H1 (cell line): ENCODE measurements at regions of chr3 and their contacts with region 1.

Region 1: DNA sequence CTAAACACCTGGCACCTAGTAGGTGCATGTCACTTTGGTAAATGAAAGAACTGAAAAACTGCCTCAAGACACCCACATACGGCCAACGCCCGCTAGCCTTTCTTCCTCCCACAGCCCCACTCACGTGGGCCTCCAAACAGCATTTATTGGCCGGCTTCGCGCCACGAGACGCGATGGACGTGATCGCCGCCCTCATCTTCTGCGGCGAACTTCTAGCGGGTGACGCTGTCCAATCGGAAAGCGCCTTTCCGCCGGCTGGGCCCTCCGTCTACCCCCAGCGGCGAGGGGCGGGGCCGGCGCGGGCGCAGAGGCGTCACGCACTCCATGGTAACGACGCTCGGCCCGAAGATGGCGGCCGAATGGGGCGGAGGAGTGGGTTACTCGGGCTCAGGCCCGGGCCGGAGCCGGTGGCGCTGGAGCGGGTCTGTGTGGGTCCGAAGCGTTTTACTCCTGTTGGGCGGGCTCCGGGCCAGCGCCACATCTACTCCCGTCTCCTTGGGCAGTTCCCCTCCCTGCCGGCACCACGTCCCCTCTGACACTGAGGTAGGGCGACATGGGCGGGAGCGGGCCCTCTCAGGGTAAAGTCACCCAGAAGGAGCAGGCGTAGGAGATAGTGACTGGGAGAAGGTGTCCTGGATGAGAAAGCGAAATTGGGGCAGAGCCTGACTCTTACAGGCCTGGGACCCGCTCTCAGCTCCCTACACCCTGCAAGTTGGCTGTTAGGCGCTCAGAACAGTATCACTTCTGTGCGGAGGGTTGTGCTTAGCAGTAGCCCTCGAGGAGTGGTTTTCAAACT is at the start of gene LMLN:
- DNase-seq: peak; percentile 68 to 96
- H3K4me3 ChIP-seq: peak within 1 kb of the TSS; percentile 57 to 85 (median 78)
- H3K27ac ChIP-seq: peak within 1 kb of the TSS; percentile 47; the same call in 1 of the 2 replicates
- H3K4me1 ChIP-seq: peaks cover 0 to 3% (median under 1%) of the 10 kb centered on the region in 4 experiments; a peak in 4 of 7 replicates
- H3K27me3 ChIP-seq: no peaks in the 10 kb centered on the region; a peak in 1 of 7 replicates
- CTCF ChIP-seq: no peak
- EP300 ChIP-seq: no peak
- POLR2A ChIP-seq: peak; percentile 79
- RAD21 ChIP-seq: no peak
- total RNA-seq, gene LMLN: 4.7 and 5.0 TPM in 2 replicates

Region 2: GRCh38 chr3:197711973-197712707 is 248.0 kb before region 1 on chr3:
- CTCF ChIA-PET with region 1: no interaction called
- POLR2A ChIA-PET with region 1: no interaction called
- DNase-seq: peak; percentile 36 to 50
- H3K4me3 ChIP-seq: no peak overlapping the region
- H3K27ac ChIP-seq: peak overlapping the region; percentile 27; the same call in 1 of the 2 replicates
- H3K4me1 ChIP-seq: peaks cover 0 to 6% (median 3%) of the 10 kb centered on the region in 4 experiments; a peak in 4 of 7 replicates
- H3K27me3 ChIP-seq: no peaks in the 10 kb centered on the region
- CTCF ChIP-seq: no peak
- EP300 ChIP-seq: no peak
- POLR2A ChIP-seq: no peak
- RAD21 ChIP-seq: no peak

Region 3: GRCh38 chr3:197949754-197950660 is 10.1 kb before region 1 on chr3 and contains the start of gene RPL35A:
- CTCF ChIA-PET with region 1: interaction called, 6 read pairs
- POLR2A ChIA-PET with region 1: interaction called, 69 read pairs
- DNase-seq: peak; percentile 63 to 90
- H3K4me3 ChIP-seq: peak within 1 kb of the TSS; percentile 95 to 100 (median 98)
- H3K27ac ChIP-seq: peak within 1 kb of the TSS; percentile 96
- H3K4me1 ChIP-seq: peaks cover 0 to 8% (median 4%) of the 10 kb centered on the region in 4 experiments; a peak in 5 of 7 replicates
- H3K27me3 ChIP-seq: no peaks in the 10 kb centered on the region
- CTCF ChIP-seq: no peak
- EP300 ChIP-seq: 0 out of 3 replicates have a peak, but pooled peaks of 1 of the 2 experiments have one; percentile 4
- POLR2A ChIP-seq: peak; percentile 93 to 96
- RAD21 ChIP-seq: no peak
- total RNA-seq, gene RPL35A: 1,393 and 1,439 TPM in 2 replicates

Region 4: DNA sequence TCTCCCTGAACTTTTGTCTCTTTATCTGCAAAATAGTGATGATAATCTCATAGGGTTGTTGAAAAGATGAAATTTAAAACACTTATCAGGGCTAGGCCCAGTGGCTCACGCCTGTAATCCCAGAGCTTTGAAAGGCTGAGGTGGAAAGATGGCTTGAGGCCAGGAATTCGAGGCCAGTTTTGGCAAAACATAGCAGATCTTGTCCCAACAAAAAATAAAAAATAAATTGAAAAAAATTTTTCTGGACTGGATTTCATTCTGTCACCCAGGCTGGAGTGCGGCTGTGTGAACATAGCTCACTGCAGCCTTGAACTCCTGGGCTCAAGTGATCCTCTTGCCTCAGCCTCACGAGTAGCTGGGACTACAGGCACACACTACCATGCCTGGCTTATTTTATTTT is 29.6 kb after region 1 on chr3:
- CTCF ChIA-PET with region 1: no interaction called
- POLR2A ChIA-PET with region 1: no interaction called
- DNase-seq: no peak
- H3K4me3 ChIP-seq: no peak overlapping the region
- H3K27ac ChIP-seq: no peak overlapping the region
- H3K4me1 ChIP-seq: no peaks in the 10 kb centered on the region
- H3K27me3 ChIP-seq: peaks cover 0 to 1% (median 0%) of the 10 kb centered on the region in 4 experiments; a peak in 1 of 7 replicates
- CTCF ChIP-seq: no peak
- EP300 ChIP-seq: no peak
- POLR2A ChIP-seq: no peak
- RAD21 ChIP-seq: no peak